ENCODE measurements at regions of chr9 and their contacts with region 1.

Region 1: DNA sequence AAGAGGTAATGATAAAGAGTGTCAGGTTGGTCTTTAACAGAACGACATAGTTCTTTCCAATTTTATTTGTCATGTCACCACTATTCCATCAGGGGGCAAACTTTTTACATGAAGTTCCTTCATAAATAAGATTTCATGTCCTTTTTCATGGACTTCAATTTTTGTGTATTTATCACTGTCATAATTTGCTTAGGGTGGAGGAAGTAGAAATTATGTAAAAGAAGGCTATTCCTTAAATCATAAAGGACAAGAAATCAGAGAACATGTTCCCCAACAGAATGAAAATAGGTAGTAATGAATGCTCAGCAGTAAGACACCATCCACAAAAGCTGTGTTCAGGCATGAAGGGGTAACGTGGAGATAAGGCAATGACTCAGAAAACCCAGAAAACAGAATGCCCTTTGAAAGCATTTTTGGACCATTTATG is 72.7 kb downstream of the ZFAND5 start:
- DNase-seq: no peak
- ATAC-seq: no peak

Region 2: DNA sequence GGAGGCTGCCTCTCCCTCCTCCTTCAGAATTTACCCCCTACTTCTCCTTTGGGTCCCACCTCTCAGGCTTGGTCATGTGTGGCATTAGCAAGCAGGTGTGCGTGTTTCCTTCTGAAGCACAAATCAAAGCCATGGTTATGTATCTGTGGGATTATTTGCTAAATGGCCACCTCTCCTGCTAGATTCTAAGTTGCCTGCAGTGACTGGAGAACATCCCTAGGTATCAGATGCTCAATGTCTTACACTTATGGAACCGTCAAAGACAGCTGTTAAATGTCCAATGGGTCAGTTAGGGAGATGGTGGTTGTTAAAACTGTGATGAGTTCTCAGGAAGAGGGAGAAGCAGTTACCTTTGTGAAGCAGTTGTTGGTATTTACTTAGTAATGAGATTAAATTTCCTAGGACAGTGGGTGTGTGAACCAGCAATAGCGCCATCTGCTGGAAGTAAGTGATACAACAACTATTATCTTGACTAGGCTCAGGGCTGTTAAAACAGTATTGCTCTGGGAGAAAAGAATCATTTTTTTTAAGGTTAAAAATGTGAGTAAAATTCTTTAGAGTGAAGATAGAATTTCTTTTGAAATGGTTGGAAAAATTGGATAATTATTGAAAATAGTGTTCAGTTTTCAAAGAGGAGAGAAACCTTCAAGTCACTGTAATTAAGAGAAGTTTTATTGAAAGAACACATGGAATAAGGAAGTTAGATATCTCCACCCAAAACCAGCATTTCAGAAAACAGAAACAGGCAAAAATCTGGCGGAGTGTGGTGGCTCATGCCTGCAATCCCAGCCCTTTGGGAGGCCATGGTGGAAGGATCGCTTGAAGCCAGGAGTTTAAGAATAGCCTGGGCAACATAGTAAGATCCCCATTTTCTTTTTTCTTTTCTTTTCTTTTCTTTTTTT is 300.5 kb after region 1 on chr9:
- intact Hi-C with region 1: loop called (anchors 5 to 10 kb)
- DNase-seq: no peak
- ATAC-seq: peak; percentile 54